T-cell (primary cell): ENCODE measurements at regions of chr3 and their contacts with region 1.

Region 1: GRCh38 chr3:37197810-37198371 is 23.5 kb upstream of the LRRFIP2 start:
- DNase-seq: no peak
- ATAC-seq: no peak
- H3K4me3 ChIP-seq: no peak overlapping the region
- H3K4me3 Mint-ChIP-seq: no peak overlapping the region
- H3K27ac ChIP-seq: no peak overlapping the region
- H3K27ac Mint-ChIP-seq: no peak overlapping the region
- H3K4me1 ChIP-seq: no peaks in the 10 kb centered on the region
- H3K4me1 Mint-ChIP-seq: no peaks in the 10 kb centered on the region
- H3K27me3 ChIP-seq: no peaks in the 10 kb centered on the region
- H3K27me3 Mint-ChIP-seq: peaks cover 0 to 8% of the 10 kb centered on the region in 2 donors

Region 2: GRCh38 chr3:36756269-36756668 is 441.6 kb before region 1 on chr3:
- CTCF ChIA-PET with region 1: no interaction called
- POLR2A ChIA-PET with region 1: interaction called in 1 of 2 experiments, 13 read pairs
- DNase-seq: no peak
- ATAC-seq: no peak
- H3K4me3 ChIP-seq: no peak overlapping the region
- H3K4me3 Mint-ChIP-seq: no peak overlapping the region
- H3K27ac ChIP-seq: no peak overlapping the region
- H3K27ac Mint-ChIP-seq: no peak overlapping the region
- H3K4me1 ChIP-seq: no peaks in the 10 kb centered on the region
- H3K4me1 Mint-ChIP-seq: no peaks in the 10 kb centered on the region
- H3K27me3 ChIP-seq: peaks cover 0 to 22% of the 10 kb centered on the region in 2 experiments
- H3K27me3 Mint-ChIP-seq: peaks cover 28 to 44% of the 10 kb centered on the region in 2 donors

Region 3: GRCh38 chr3:36792342-36792741 is 405.5 kb before region 1 on chr3:
- CTCF ChIA-PET with region 1: no interaction called
- POLR2A ChIA-PET with region 1: no interaction called
- DNase-seq: peak in 2 of 35 experiments; percentile 4 to 31
- ATAC-seq: no peak
- H3K4me3 ChIP-seq: no peak overlapping the region
- H3K4me3 Mint-ChIP-seq: no peak overlapping the region
- H3K27ac ChIP-seq: no peak overlapping the region
- H3K27ac Mint-ChIP-seq: no peak overlapping the region
- H3K4me1 ChIP-seq: no peaks in the 10 kb centered on the region
- H3K4me1 Mint-ChIP-seq: no peaks in the 10 kb centered on the region
- H3K27me3 ChIP-seq: peaks cover 0 to 4% of the 10 kb centered on the region in 2 experiments
- H3K27me3 Mint-ChIP-seq: peaks cover 7 to 14% of the 10 kb centered on the region in 2 donors

Region 4: GRCh38 chr3:37154668-37155314 is 43.1 kb before region 1 on chr3:
- CTCF ChIA-PET with region 1: no interaction called
- POLR2A ChIA-PET with region 1: no interaction called
- DNase-seq: no peak
- ATAC-seq: no peak
- H3K4me3 ChIP-seq: no peak overlapping the region
- H3K4me3 Mint-ChIP-seq: no peak overlapping the region
- H3K27ac ChIP-seq: no peak overlapping the region
- H3K27ac Mint-ChIP-seq: no peak overlapping the region
- H3K4me1 ChIP-seq: no peaks in the 10 kb centered on the region
- H3K4me1 Mint-ChIP-seq: peaks cover 26 to 35% (median 28%) of the 10 kb centered on the region in 3 donors
- H3K27me3 ChIP-seq: no peaks in the 10 kb centered on the region
- H3K27me3 Mint-ChIP-seq: no peaks in the 10 kb centered on the region

Region 5: DNA sequence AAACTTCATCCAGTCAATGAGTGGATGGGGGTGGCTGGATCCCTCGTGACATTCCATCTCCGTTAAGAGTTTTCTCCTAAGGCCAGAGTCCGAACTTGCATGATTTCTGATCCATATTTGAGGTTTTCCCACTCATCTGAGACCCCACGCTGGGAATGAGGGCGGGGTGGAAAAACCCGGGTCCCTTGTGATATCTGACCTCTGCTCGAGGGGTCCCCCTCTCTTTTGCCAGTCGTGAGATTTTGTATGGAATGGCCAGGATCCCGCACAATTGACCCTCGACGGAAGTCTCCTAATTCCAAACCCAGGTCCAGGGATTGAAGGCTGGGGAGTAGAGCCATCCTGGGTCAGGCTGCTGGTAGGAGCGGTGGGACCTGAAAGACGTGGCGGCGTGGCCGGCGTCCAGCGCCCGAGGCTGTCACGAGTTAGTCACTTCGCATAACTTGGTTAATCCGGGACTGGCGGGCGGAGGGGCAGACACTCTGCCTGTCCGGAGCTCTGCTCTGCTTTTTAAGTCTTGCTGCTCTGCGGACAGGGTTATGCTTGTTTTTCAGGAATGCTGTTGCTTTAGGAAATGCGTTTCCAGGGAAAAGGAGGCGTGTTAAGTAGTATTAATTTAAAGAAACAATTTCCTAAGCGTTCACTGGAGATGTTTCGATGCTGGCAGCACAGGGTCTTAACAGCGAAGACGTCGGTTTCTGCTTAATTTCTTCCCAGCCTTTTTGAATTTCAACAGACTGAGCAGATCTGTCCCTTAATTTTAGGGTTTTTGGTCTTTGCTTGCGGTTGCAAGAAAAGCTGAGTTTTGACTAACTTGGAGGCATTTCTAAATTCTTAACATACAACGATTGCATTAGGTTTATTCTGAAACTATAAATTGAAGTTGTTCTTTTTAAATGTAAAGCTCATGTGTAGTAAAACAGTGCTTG is 46.2 kb after region 1 on chr3:
- CTCF ChIA-PET with region 1: no interaction called
- POLR2A ChIA-PET with region 1: no interaction called
- DNase-seq: peak in 9 of 35 experiments; percentile 5 to 38 (median 16)
- ATAC-seq: no peak
- H3K4me3 ChIP-seq: peak overlapping the region; percentile 99
- H3K4me3 Mint-ChIP-seq: peak overlapping the region; percentile 92 to 95 (median 94)
- H3K27ac ChIP-seq: peak overlapping the region; percentile 94
- H3K27ac Mint-ChIP-seq: peak overlapping the region; percentile 83 to 99
- H3K4me1 ChIP-seq: peaks cover 24 to 29% of the 10 kb centered on the region in 2 experiments
- H3K4me1 Mint-ChIP-seq: peaks cover 60 to 61% (median 60%) of the 10 kb centered on the region in 3 donors
- H3K27me3 ChIP-seq: no peaks in the 10 kb centered on the region
- H3K27me3 Mint-ChIP-seq: no peaks in the 10 kb centered on the region

Region 6: GRCh38 chr3:37256447-37256846 is 58.6 kb after region 1 on chr3:
- CTCF ChIA-PET with region 1: no interaction called
- POLR2A ChIA-PET with region 1: no interaction called
- DNase-seq: peak in 1 of 35 experiments; percentile 24
- ATAC-seq: peak in 1 of 4 experiments; percentile 57
- H3K4me3 ChIP-seq: no peak overlapping the region
- H3K4me3 Mint-ChIP-seq: no peak overlapping the region
- H3K27ac ChIP-seq: no peak overlapping the region
- H3K27ac Mint-ChIP-seq: no peak overlapping the region
- H3K4me1 ChIP-seq: peaks cover 2 to 16% of the 10 kb centered on the region in 2 experiments
- H3K4me1 Mint-ChIP-seq: peaks cover 47 to 50% (median 48%) of the 10 kb centered on the region in 3 donors
- H3K27me3 ChIP-seq: no peaks in the 10 kb centered on the region
- H3K27me3 Mint-ChIP-seq: no peaks in the 10 kb centered on the region